Body of pancreas (tissue), 4 donors: ENCODE measurements at regions of chr1 and their contacts with region 1.

Region 1: GRCh38 chr1:234309598-234310459 is 63.4 kb upstream of the COA6 start:
- DNase-seq: peak; percentile 76 to 84 (median 78)
- ATAC-seq: peak; percentile 88
- H3K4me3 ChIP-seq: no peak overlapping the region
- H3K27ac ChIP-seq: no peak overlapping the region
- H3K4me1 ChIP-seq: peaks cover 11% of the 10 kb centered on the region
- H3K27me3 ChIP-seq: no peaks in the 10 kb centered on the region
- CTCF ChIP-seq: peak; percentile 75 to 93 (median 85)
- POLR2A ChIP-seq: no peak

Region 2: GRCh38 chr1:233945573-233945972 is 364.3 kb before region 1 on chr1:
- intact Hi-C with region 1: no loop called
- DNase-seq: no peak
- ATAC-seq: no peak
- H3K4me3 ChIP-seq: no peak overlapping the region
- H3K27ac ChIP-seq: no peak overlapping the region
- H3K4me1 ChIP-seq: no peaks in the 10 kb centered on the region
- H3K27me3 ChIP-seq: no peaks in the 10 kb centered on the region
- CTCF ChIP-seq: no peak
- POLR2A ChIP-seq: no peak

Region 3: DNA sequence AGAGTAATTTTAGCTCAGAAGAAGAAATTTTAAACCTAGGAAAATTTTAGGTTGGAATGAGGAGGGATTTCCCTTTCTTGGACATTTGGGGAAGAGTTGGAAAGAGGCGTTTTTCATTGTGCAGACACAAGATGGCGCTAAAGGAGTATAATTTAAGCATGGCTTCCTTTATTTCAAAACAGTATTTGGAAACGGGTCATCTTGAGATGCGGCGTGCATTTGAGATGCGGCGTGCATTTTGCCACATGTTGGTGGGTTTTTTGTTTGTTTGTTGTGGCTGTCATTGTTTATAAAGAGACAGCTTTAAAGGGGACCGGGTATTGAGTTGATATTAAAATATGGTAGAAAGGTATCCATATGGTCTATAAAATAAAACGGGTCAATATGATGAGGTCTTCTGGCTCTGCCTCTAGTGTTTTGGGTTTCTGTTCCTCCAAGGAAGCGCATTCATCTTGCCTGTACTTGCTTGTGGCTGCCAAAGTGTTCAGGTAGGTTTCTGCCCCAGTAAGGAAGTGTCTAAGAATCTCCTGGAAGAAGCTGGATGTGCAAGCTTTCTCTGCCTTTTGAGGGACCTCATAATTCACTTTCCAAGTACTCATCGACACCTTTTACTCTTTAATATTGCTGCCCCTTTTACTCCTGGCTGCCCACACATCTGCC is 195.1 kb before region 1 on chr1:
- intact Hi-C with region 1: loop called (anchors 5 kb)
- DNase-seq: peak; percentile 33 to 50 (median 42)
- ATAC-seq: no peak
- H3K4me3 ChIP-seq: no peak overlapping the region
- H3K27ac ChIP-seq: no peak overlapping the region
- H3K4me1 ChIP-seq: peaks cover 3% of the 10 kb centered on the region
- H3K27me3 ChIP-seq: no peaks in the 10 kb centered on the region
- CTCF ChIP-seq: peak; percentile 18 to 66 (median 60)
- POLR2A ChIP-seq: no peak

Region 4: GRCh38 chr1:234154320-234155251 is 155.2 kb before region 1 on chr1:
- intact Hi-C with region 1: loop called (anchors 10 kb)
- DNase-seq: peak in 3 of 4 donors; percentile 13 to 34 (median 31)
- ATAC-seq: no peak
- H3K4me3 ChIP-seq: no peak overlapping the region
- H3K27ac ChIP-seq: no peak overlapping the region
- H3K4me1 ChIP-seq: no peaks in the 10 kb centered on the region
- H3K27me3 ChIP-seq: no peaks in the 10 kb centered on the region
- CTCF ChIP-seq: peak; percentile 48 to 83 (median 68)
- POLR2A ChIP-seq: no peak

Region 5: GRCh38 chr1:234214911-234215892 is 94.6 kb before region 1 on chr1:
- intact Hi-C with region 1: loop called (anchors 5 kb)
- DNase-seq: peak; percentile 81 to 95 (median 88)
- ATAC-seq: peak; percentile 84
- H3K4me3 ChIP-seq: peak overlapping the region; percentile 20 to 27
- H3K27ac ChIP-seq: peak overlapping the region; percentile 62 to 94 (median 71)
- H3K4me1 ChIP-seq: peaks cover 31% of the 10 kb centered on the region
- H3K27me3 ChIP-seq: no peaks in the 10 kb centered on the region
- CTCF ChIP-seq: no peak
- POLR2A ChIP-seq: peak; percentile 58 to 72 (median 59)

Region 6: DNA sequence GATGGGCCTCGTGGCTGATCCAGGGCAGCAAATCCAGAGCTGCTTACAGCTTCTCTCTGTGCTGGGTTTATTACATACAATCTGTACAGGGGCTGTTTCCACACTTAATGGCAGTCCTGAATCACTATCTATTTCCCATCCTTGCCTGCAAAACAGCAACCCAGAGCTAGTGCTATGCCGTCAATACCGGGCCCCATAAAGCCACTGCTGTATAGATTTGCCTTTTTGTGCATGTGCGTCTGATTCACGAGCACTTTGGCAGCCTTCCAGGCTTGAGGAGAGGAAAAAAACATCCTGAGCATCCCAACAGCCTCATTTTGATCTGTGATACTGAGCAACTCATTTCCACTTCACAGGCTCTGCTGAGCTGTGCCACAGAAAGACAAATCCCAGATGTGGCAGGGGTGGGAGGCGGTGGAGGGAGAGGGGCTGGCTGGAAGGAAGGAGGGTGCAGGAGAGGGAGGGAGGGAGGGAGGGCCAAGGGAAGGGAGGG is 234.3 kb after region 1 on chr1:
- intact Hi-C with region 1: no loop called
- DNase-seq: peak; percentile 56 to 75 (median 70)
- ATAC-seq: peak; percentile 34
- H3K4me3 ChIP-seq: no peak overlapping the region
- H3K27ac ChIP-seq: peak overlapping the region; percentile 90 to 99 (median 96)
- H3K4me1 ChIP-seq: peaks cover 51% of the 10 kb centered on the region
- H3K27me3 ChIP-seq: no peaks in the 10 kb centered on the region
- CTCF ChIP-seq: no peak
- POLR2A ChIP-seq: no peak